ENCODE measurements at regions of chr21 and their contacts with region 1.

Region 1: GRCh38 chr21:45140346-45140940 is 66.1 kb downstream of the ADARB1 start:
- H3K4me3 ChIP-seq: no peak overlapping the region
- H3K27ac ChIP-seq: no peak overlapping the region
- H3K4me1 ChIP-seq: no peaks in the 10 kb centered on the region
- CTCF ChIP-seq: peak; percentile 98

Region 2: GRCh38 chr21:44939532-44940115 is 200.8 kb before region 1 on chr21 and contains the start of gene SLX9:
- CTCF ChIA-PET with region 1: interaction called, 333 read pairs
- POLR2A ChIA-PET with region 1: interaction called, 3 read pairs
- H3K4me3 ChIP-seq: peak within 1 kb of the TSS; percentile 87
- H3K27ac ChIP-seq: peak within 1 kb of the TSS; percentile 69
- H3K4me1 ChIP-seq: peaks cover 11% of the 10 kb centered on the region; the same call in 1 of the 2 replicates
- CTCF ChIP-seq: peak; percentile 59; the same call in 1 of the 2 replicates

Region 3: DNA sequence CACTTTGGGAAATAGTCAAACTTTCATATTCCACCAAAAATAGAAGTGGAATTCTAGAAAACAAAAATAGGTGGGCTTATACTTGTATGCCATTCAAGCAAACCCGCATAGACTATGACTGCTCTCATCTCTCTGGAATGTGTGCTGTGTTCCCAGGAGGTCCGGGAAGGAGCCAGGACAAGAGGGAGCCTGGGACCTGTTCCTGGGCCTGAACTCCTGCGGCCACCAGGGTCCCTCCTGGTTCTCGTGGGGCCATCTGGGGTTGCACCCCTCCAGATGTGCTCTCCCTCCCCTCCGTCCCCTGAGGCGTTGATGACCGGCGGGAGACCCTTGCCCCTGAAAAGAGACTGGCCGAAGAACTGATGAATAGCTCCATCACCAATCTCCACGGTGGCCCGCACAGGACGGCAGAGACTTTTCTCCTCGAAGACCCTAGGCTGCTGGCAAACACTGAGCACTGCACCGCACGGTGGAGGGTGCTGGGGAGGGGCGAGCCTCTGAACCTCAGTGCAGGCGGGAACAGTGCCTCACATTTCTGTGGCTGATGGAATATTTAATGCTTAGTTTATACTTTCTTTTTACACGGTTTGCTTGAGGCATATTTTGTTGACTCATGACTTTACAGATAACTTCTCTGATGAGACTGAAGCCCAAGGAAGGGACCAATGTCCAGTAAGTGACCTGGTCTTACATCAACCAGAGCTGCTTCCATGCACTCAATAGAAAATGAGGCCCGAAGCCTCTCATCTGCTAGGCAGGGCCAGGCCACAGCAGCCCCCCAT is 75.6 kb before region 1 on chr21:
- CTCF ChIA-PET with region 1: interaction called, 35 read pairs
- POLR2A ChIA-PET with region 1: no interaction called
- H3K4me3 ChIP-seq: no peak overlapping the region
- H3K27ac ChIP-seq: no peak overlapping the region
- H3K4me1 ChIP-seq: no peaks in the 10 kb centered on the region
- CTCF ChIP-seq: no peak

Region 4: GRCh38 chr21:45104560-45104959 is 35.9 kb before region 1 on chr21:
- CTCF ChIA-PET with region 1: interaction called, 70 read pairs
- POLR2A ChIA-PET with region 1: no interaction called
- H3K4me3 ChIP-seq: no peak overlapping the region
- H3K27ac ChIP-seq: no peak overlapping the region
- H3K4me1 ChIP-seq: peaks cover 14% of the 10 kb centered on the region; the same call in 1 of the 2 replicates
- CTCF ChIP-seq: no peak

Region 5: DNA sequence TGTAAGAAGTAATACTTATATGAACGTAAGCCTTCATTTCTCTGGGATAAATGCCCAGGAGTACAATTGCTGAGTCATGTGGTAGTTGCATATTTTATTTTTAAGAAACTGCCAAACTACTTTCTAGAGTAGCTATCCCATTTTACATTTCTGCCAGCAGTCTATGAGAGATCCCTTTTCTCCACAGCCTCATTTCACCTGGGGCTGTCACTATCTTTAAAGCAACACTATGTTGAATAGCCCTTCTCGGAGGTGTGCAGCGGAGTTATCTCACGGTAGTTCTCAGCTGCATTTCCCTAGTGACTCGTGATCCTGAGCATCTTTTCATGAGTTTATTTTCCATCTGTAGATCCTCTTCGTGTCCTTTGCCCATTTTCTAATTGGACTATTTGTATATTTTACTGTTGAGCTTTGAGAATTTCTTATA is 27.4 kb after region 1 on chr21:
- CTCF ChIA-PET with region 1: interaction called, 100 read pairs
- POLR2A ChIA-PET with region 1: no interaction called
- H3K4me3 ChIP-seq: no peak overlapping the region
- H3K27ac ChIP-seq: no peak overlapping the region
- H3K4me1 ChIP-seq: peaks cover 2% of the 10 kb centered on the region; the same call in 1 of the 2 replicates
- CTCF ChIP-seq: no peak

Region 6: GRCh38 chr21:45270306-45270821 is 129.9 kb after region 1 on chr21:
- CTCF ChIA-PET with region 1: interaction called, 11 read pairs
- POLR2A ChIA-PET with region 1: no interaction called
- H3K4me3 ChIP-seq: no peak overlapping the region
- H3K27ac ChIP-seq: no peak overlapping the region
- H3K4me1 ChIP-seq: no peaks in the 10 kb centered on the region
- CTCF ChIP-seq: no peak

Region 7: GRCh38 chr21:45439161-45439872 is 298.9 kb after region 1 on chr21:
- CTCF ChIA-PET with region 1: interaction called, 39 read pairs
- POLR2A ChIA-PET with region 1: no interaction called
- H3K4me3 ChIP-seq: no peak overlapping the region
- H3K27ac ChIP-seq: no peak overlapping the region
- H3K4me1 ChIP-seq: no peaks in the 10 kb centered on the region
- CTCF ChIP-seq: peak; percentile 95

Measured in HEK293 (cell line).